ENCODE measurements at regions of chr17 and their contacts with region 1.

Region 1: GRCh38 chr17:58710936-58711775 is 18.8 kb downstream of the RAD51C start:
- DNase-seq: peak; percentile 15
- ATAC-seq: no peak
- H3K4me3 ChIP-seq: no peak overlapping the region
- H3K27ac ChIP-seq: no peak overlapping the region
- H3K4me1 ChIP-seq: no peaks in the 10 kb centered on the region
- H3K27me3 ChIP-seq: no peaks in the 10 kb centered on the region
- CTCF ChIP-seq: peak; percentile 68; the same call in 1 of the 2 replicates

Region 2: GRCh38 chr17:58517734-58518609 is 193.2 kb before region 1 on chr17:
- CTCF ChIA-PET with region 1: interaction called, 4 read pairs
- POLR2A ChIA-PET with region 1: interaction called, 12 read pairs
- in situ Hi-C with region 1: no loop called
- intact Hi-C with region 1: no loop called
- DNase-seq: peak; percentile 93
- ATAC-seq: peak; percentile 90
- H3K4me3 ChIP-seq: peak overlapping the region; percentile 87 to 95
- H3K27ac ChIP-seq: peak overlapping the region; percentile 82
- H3K4me1 ChIP-seq: peaks cover 9% of the 10 kb centered on the region; the same call in 1 of the 2 replicates
- H3K27me3 ChIP-seq: no peaks in the 10 kb centered on the region
- CTCF ChIP-seq: no peak

Region 3: DNA sequence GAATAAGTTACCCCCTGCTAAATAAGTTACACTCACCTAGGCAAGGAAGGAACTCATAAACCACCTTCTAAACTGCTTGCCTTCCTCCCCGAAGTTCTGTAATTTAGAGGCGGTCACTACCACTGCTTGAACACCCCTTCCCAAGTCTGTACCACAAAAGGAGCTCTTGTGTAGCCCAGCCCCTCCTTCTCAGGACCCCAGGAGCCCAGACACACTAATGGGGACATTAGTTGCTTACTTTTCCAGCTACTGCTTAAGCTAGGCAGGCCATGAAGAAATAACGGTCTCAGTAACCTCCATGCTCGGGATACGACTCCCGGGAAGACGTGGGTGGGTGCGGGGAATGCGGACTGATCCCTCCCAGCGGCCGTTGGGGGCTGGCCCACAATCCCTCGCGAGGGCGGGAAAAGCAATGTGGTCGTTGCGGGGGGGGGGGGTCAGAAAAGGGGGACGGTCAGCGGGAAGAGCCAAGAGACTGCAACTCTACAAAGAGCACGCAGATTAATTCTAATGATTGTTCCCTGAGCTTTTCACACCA is 19.4 kb before region 1 on chr17 and contains the start of gene TEX14:
- CTCF ChIA-PET with region 1: no interaction called
- POLR2A ChIA-PET with region 1: no interaction called
- in situ Hi-C with region 1: no loop called
- intact Hi-C with region 1: no loop called
- DNase-seq: no peak
- ATAC-seq: no peak
- H3K4me3 ChIP-seq: peak within 1 kb of the TSS; percentile 68 to 88
- H3K27ac ChIP-seq: peak within 1 kb of the TSS; percentile 91
- H3K4me1 ChIP-seq: peaks cover 3% of the 10 kb centered on the region
- H3K27me3 ChIP-seq: no peaks in the 10 kb centered on the region
- CTCF ChIP-seq: no peak
- total RNA-seq, gene TEX14: not detected

Region 4: GRCh38 chr17:58786613-58787295 is 75.6 kb after region 1 on chr17:
- CTCF ChIA-PET with region 1: no interaction called
- POLR2A ChIA-PET with region 1: no interaction called
- in situ Hi-C with region 1: no loop called
- intact Hi-C with region 1: no loop called
- DNase-seq: no peak
- ATAC-seq: no peak
- H3K4me3 ChIP-seq: no peak overlapping the region
- H3K27ac ChIP-seq: peak overlapping the region; percentile 12; the same call in 1 of the 2 replicates
- H3K4me1 ChIP-seq: no peaks in the 10 kb centered on the region
- H3K27me3 ChIP-seq: no peaks in the 10 kb centered on the region
- CTCF ChIP-seq: no peak

Region 5: GRCh38 chr17:59004338-59005111 is 293.4 kb after region 1 on chr17:
- CTCF ChIA-PET with region 1: interaction called, 5 read pairs
- POLR2A ChIA-PET with region 1: no interaction called
- in situ Hi-C with region 1: no loop called
- intact Hi-C with region 1: loop called (anchors 2 kb)
- DNase-seq: peak; percentile 50
- ATAC-seq: peak; percentile 80; the same call in 1 of the 2 replicates
- H3K4me3 ChIP-seq: no peak overlapping the region
- H3K27ac ChIP-seq: no peak overlapping the region
- H3K4me1 ChIP-seq: no peaks in the 10 kb centered on the region
- H3K27me3 ChIP-seq: no peaks in the 10 kb centered on the region
- CTCF ChIP-seq: peak; percentile 76; the same call in 1 of the 2 replicates